Mammary epithelial cell (primary cell): ENCODE measurements at regions of chr4 and their contacts with region 1.

Region 1: GRCh38 chr4:186725469-186726425 is 2.1 kb upstream of the FAT1 start:
- DNase-seq: peak; percentile 77
- H3K4me3 ChIP-seq: peak overlapping the region; percentile 92 to 100 (median 99)
- H3K27ac ChIP-seq: peak overlapping the region; percentile 99
- H3K4me1 ChIP-seq: peaks cover 30% of the 10 kb centered on the region
- H3K27me3 ChIP-seq: no peaks in the 10 kb centered on the region
- CTCF ChIP-seq: peak; percentile 52 to 90

Region 2: GRCh38 chr4:186297013-186297645 is 428.6 kb before region 1 on chr4:
- CTCF ChIA-PET with region 1: no interaction called
- dilution Hi-C with region 1: no loop called
- in situ Hi-C with region 1: no loop called
- intact Hi-C with region 1: loop called (anchors 5 kb)
- DNase-seq: peak; percentile 29
- H3K4me3 ChIP-seq: no peak overlapping the region
- H3K27ac ChIP-seq: no peak overlapping the region
- H3K4me1 ChIP-seq: no peaks in the 10 kb centered on the region
- H3K27me3 ChIP-seq: no peaks in the 10 kb centered on the region
- CTCF ChIP-seq: peak; percentile 62

Region 3: DNA sequence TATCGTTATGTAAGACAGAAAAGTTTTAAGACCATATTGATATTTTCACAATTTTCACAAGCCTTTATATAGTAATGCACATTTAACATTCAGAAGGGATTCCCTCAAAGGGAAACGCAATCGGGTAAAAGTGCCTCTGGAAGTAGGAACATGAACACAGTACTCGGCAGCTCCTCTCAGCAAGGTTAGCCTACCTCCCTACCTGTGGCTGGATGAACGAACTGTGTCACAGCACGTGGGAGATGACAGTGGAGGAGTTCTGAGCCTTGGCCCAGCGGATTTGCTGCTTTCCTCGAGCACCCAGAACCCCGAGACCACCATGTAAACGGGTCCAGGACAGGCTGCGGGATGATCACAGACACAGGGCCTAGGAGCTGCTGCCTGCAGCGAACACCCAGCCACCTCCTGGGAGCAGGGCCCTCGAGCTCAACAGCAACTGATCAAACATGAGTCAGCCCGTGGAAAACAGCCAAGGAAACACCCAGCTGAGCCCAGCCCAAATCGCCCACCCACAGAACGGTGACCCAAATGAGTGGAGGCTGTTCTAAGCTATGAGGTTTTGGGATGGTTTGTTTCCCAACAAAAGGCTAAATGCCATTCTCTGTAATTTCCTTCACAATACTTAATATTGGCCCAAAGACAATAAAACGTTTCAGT is 32.5 kb before region 1 on chr4:
- CTCF ChIA-PET with region 1: no interaction called
- dilution Hi-C with region 1: no loop called
- in situ Hi-C with region 1: no loop called
- intact Hi-C with region 1: no loop called
- DNase-seq: peak; percentile 93
- H3K4me3 ChIP-seq: peak overlapping the region in 1 of 3 experiments; percentile 6
- H3K27ac ChIP-seq: peak overlapping the region; percentile 58
- H3K4me1 ChIP-seq: peaks cover 19% of the 10 kb centered on the region
- H3K27me3 ChIP-seq: no peaks in the 10 kb centered on the region
- CTCF ChIP-seq: no peak

Region 4: GRCh38 chr4:186781032-186781917 is 55.5 kb after region 1 on chr4:
- CTCF ChIA-PET with region 1: no interaction called
- dilution Hi-C with region 1: no loop called
- in situ Hi-C with region 1: no loop called
- intact Hi-C with region 1: loop called (anchors 5 kb)
- DNase-seq: peak; percentile 93
- H3K4me3 ChIP-seq: no peak overlapping the region
- H3K27ac ChIP-seq: peak overlapping the region; percentile 81
- H3K4me1 ChIP-seq: peaks cover 24% of the 10 kb centered on the region
- H3K27me3 ChIP-seq: no peaks in the 10 kb centered on the region
- CTCF ChIP-seq: no peak

Region 5: GRCh38 chr4:186904101-186904500 is 178.4 kb after region 1 on chr4:
- CTCF ChIA-PET with region 1: no interaction called
- dilution Hi-C with region 1: no loop called
- in situ Hi-C with region 1: loop called in 1 of 2 experiments (anchors 25 kb)
- intact Hi-C with region 1: loop called (anchors 1 kb)
- DNase-seq: peak; percentile 84
- H3K4me3 ChIP-seq: no peak overlapping the region
- H3K27ac ChIP-seq: peak overlapping the region; percentile 10
- H3K4me1 ChIP-seq: peaks cover 14% of the 10 kb centered on the region
- H3K27me3 ChIP-seq: no peaks in the 10 kb centered on the region
- CTCF ChIP-seq: no peak

Region 6: DNA sequence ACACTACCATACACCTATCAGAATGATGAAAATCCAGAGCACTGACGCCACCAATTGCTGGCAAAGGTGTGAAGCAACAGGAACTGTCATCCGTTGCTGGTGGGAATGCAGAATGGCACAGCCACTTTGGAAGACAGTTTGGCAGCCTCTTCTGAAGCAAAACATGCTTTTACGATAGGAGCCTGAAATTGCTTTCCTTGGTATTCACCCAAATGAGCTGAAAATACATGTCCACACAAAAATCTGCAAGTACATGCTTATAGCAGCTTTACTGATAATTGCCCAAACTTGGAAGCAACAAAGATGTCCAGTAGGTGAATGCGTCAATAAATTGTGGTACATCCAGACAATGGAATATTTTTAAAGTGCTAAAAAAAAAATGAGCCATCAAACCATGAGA is 320.7 kb after region 1 on chr4:
- CTCF ChIA-PET with region 1: no interaction called
- dilution Hi-C with region 1: no loop called
- in situ Hi-C with region 1: no loop called
- intact Hi-C with region 1: loop called (anchors 2 kb)
- DNase-seq: peak; percentile 55
- H3K4me3 ChIP-seq: no peak overlapping the region
- H3K27ac ChIP-seq: no peak overlapping the region
- H3K4me1 ChIP-seq: peaks cover 17% of the 10 kb centered on the region
- H3K27me3 ChIP-seq: no peaks in the 10 kb centered on the region
- CTCF ChIP-seq: peak in 1 of 2 donors; percentile 27

Region 7: DNA sequence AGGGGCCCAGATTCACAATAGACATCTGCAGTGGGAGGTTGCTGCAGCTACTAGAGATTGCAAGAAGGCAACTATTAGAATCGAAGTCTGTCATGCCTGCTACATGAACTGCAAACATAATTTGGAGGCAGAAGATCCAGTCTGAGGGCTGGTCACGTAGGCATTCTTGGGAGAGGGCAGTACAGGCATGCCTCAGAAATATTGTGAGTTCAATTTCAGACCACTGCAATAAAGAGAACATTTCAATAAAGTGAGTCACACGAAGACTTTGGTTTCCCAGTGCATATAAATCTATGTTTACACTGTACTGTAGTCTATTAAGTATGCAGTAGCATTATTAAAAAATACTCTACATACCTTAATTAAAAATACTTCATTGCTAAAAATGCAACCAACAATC is 583.7 kb after region 1 on chr4:
- CTCF ChIA-PET with region 1: no interaction called
- dilution Hi-C with region 1: no loop called
- in situ Hi-C with region 1: no loop called
- intact Hi-C with region 1: loop called (anchors 2 kb)
- DNase-seq: peak; percentile 73
- H3K4me3 ChIP-seq: no peak overlapping the region
- H3K27ac ChIP-seq: peak overlapping the region; percentile 91
- H3K4me1 ChIP-seq: peaks cover 38% of the 10 kb centered on the region
- H3K27me3 ChIP-seq: no peaks in the 10 kb centered on the region
- CTCF ChIP-seq: no peak

Region 8: GRCh38 chr4:188400451-188400850 is 1674.7 kb after region 1 on chr4:
- CTCF ChIA-PET with region 1: no interaction called
- dilution Hi-C with region 1: no loop called
- in situ Hi-C with region 1: no loop called
- intact Hi-C with region 1: loop called (anchors 10 kb)
- DNase-seq: peak; percentile 80
- H3K4me3 ChIP-seq: peak overlapping the region in 1 of 3 experiments; percentile 43
- H3K27ac ChIP-seq: peak overlapping the region; percentile 85
- H3K4me1 ChIP-seq: peaks cover 45% of the 10 kb centered on the region
- H3K27me3 ChIP-seq: no peaks in the 10 kb centered on the region
- CTCF ChIP-seq: no peak